Stomach (tissue), 19 donors: ENCODE measurements at regions of chr9 and their contacts with region 1.

Region 1: DNA sequence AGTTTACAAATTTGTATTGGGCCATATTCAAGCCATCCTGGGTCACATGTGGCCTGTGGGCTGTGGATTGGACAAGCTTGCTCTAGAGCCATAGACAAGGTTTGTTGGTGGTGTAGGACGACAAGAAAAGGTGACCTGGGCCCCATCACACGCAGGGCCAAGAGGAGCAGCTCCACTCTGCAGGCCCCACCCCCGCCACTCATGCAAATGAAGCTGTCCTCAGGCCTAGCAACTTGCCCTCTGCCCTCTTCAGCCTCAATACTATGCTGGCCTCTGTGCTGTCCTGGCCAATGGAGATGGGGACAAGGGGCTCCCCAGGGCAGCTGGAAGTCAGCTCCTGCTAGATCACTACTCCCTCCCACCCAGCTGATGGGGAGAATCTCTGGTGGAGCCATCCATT is 55.2 kb upstream of the TMEM252 start:
- DNase-seq: no peak
- H3K4me3 ChIP-seq: no peak overlapping the region
- H3K27ac ChIP-seq: no peak overlapping the region
- H3K4me1 ChIP-seq: no peaks in the 10 kb centered on the region
- H3K27me3 ChIP-seq: no peaks in the 10 kb centered on the region
- CTCF ChIP-seq: no peak
- EP300 ChIP-seq: no peak
- POLR2A ChIP-seq: no peak

Region 2: DNA sequence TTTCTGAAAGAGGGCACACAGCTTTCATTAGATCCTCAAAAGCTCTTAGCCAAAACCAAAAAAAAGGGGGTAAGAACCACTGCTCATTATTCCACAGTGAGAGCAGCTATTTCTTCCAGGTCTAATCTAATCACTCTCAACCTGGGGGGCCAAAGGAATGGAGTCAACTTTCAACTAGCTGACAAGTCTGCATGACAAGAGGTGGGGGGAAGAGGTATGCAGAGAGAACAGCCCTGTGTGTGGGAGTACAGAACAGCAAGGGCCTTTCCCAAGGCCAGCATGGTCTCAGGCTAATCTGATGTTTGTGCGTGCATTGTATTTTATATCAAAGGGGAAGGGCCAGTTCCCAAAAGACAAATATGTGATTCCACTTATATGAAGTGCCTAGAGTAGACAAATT is 72.3 kb after region 1 on chr9:
- intact Hi-C with region 1: no loop called
- DNase-seq: no peak
- H3K4me3 ChIP-seq: no peak overlapping the region
- H3K27ac ChIP-seq: no peak overlapping the region
- H3K4me1 ChIP-seq: no peaks in the 10 kb centered on the region
- H3K27me3 ChIP-seq: no peaks in the 10 kb centered on the region
- CTCF ChIP-seq: no peak
- EP300 ChIP-seq: no peak
- POLR2A ChIP-seq: no peak

Region 3: GRCh38 chr9:69027355-69028096 is 431.7 kb after region 1 on chr9:
- intact Hi-C with region 1: loop called (anchors 10 kb)
- DNase-seq: peak in 1 of 2 donors; percentile 84
- H3K4me3 ChIP-seq: no peak overlapping the region
- H3K27ac ChIP-seq: no peak overlapping the region
- H3K4me1 ChIP-seq: peaks cover 0 to 14% (median 5%) of the 10 kb centered on the region in 4 donors
- H3K27me3 ChIP-seq: no peaks in the 10 kb centered on the region
- CTCF ChIP-seq: peak in 5 of 7 experiments; percentile 40 to 71 (median 58)
- EP300 ChIP-seq: no peak
- POLR2A ChIP-seq: no peak